K562 (cell line): ENCODE measurements at regions of chr1 and their contacts with region 1.

Region 1: GRCh38 chr1:31564134-31564989 is 12.0 kb upstream of the TINAGL1 start:
- DNase-seq: peak; percentile 63 to 72 (median 66)
- ATAC-seq: peak; percentile 94
- H3K4me3 ChIP-seq: no peak overlapping the region
- H3K27ac ChIP-seq: no peak overlapping the region
- H3K4me1 ChIP-seq: no peaks in the 10 kb centered on the region
- H3K27me3 ChIP-seq: peaks cover 11 to 43% of the 10 kb centered on the region in 2 experiments
- CTCF ChIP-seq: peak; percentile 87 to 95 (median 87)
- EP300 ChIP-seq: no peak
- POLR2A ChIP-seq: no peak
- RAD21 ChIP-seq: peak; percentile 88 to 96

Region 2: DNA sequence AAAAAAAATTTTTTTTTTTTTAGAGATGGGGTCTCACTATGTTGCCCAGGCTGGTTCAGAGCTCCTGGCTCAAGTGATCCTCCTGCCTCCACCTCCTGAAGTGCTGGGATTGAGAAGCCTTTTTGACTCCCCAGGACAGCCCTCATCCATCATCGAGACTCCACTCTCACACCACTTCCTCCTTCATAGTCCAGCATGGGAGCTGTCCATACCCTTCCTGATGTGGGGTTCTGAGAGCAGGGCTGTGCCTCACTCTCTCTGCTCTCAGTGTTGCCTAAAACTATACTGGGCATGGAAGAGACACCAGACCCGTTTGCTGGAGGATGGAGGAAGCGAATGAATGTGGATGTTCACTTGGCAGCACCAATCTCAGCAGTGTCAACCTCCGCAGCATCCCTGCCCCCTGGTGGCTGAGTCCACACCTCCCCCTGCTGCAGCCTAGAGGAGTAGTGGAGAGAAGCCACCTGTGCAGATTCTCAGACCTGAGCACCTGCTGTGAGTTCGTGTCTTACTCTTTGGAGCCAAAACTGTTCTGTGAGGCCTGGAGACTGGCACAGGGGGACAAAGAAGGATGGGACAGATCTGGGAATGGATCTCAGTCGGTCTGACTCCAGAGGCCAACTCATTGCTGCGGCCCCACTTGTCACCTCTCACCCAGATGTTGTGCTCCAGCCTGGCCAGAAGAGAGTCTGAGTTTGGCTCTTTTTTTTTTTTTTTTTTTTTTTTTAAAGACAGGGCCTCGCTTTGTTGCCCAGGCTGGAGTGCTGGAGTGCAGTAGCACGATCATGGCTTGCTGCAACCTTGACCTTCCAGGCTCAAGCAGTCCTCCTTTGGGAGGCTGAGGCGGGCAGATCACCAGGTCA is 29.6 kb after region 1 on chr1:
- CTCF ChIA-PET with region 1: interaction called, 25 read pairs
- POLR2A ChIA-PET with region 1: interaction called, 3 read pairs
- in situ Hi-C with region 1: no loop called
- intact Hi-C with region 1: loop called (anchors 1 kb)
- DNase-seq: peak; percentile 73 to 80 (median 78)
- ATAC-seq: peak; percentile 99
- H3K4me3 ChIP-seq: no peak overlapping the region
- H3K27ac ChIP-seq: no peak overlapping the region
- H3K4me1 ChIP-seq: peaks cover 0 to 4% of the 10 kb centered on the region in 2 experiments; a peak in 1 of 5 replicates
- H3K27me3 ChIP-seq: peaks cover 16 to 39% of the 10 kb centered on the region in 2 experiments
- CTCF ChIP-seq: peak; percentile 93 to 97 (median 94)
- EP300 ChIP-seq: no peak
- POLR2A ChIP-seq: no peak
- RAD21 ChIP-seq: peak; percentile 89 to 97

Region 3: GRCh38 chr1:31617917-31618660 is 53.7 kb after region 1 on chr1:
- CTCF ChIA-PET with region 1: interaction called, 6 read pairs
- POLR2A ChIA-PET with region 1: no interaction called
- in situ Hi-C with region 1: no loop called
- intact Hi-C with region 1: loop called (anchors 2 kb)
- DNase-seq: peak; percentile 65 to 89 (median 80)
- ATAC-seq: peak; percentile 93
- H3K4me3 ChIP-seq: peak overlapping the region; percentile 14; the same call in 1 of the 2 replicates
- H3K27ac ChIP-seq: no peak overlapping the region
- H3K4me1 ChIP-seq: peaks cover 0 to 19% of the 10 kb centered on the region in 2 experiments; a peak in 2 of 5 replicates
- H3K27me3 ChIP-seq: peaks cover 30 to 67% of the 10 kb centered on the region in 2 experiments
- CTCF ChIP-seq: peak; percentile 75 to 85 (median 76)
- EP300 ChIP-seq: no peak
- POLR2A ChIP-seq: no peak
- RAD21 ChIP-seq: peak; percentile 37 to 59

Region 4: GRCh38 chr1:31633053-31633452 is 68.7 kb after region 1 on chr1:
- CTCF ChIA-PET with region 1: interaction called, 3 read pairs
- POLR2A ChIA-PET with region 1: no interaction called
- in situ Hi-C with region 1: no loop called
- intact Hi-C with region 1: loop called (anchors 5 kb)
- DNase-seq: peak; percentile 64 to 76 (median 73)
- ATAC-seq: peak; percentile 94
- H3K4me3 ChIP-seq: no peak overlapping the region
- H3K27ac ChIP-seq: no peak overlapping the region; the same call in 2 of the 3 replicates
- H3K4me1 ChIP-seq: peaks cover 0 to 3% of the 10 kb centered on the region in 2 experiments; a peak in 1 of 5 replicates
- H3K27me3 ChIP-seq: no peaks in the 10 kb centered on the region
- CTCF ChIP-seq: peak; percentile 76 to 92 (median 78)
- EP300 ChIP-seq: no peak
- POLR2A ChIP-seq: no peak
- RAD21 ChIP-seq: peak in 1 of 2 experiments; percentile 56; a peak in 3 of 4 replicates

Region 5: DNA sequence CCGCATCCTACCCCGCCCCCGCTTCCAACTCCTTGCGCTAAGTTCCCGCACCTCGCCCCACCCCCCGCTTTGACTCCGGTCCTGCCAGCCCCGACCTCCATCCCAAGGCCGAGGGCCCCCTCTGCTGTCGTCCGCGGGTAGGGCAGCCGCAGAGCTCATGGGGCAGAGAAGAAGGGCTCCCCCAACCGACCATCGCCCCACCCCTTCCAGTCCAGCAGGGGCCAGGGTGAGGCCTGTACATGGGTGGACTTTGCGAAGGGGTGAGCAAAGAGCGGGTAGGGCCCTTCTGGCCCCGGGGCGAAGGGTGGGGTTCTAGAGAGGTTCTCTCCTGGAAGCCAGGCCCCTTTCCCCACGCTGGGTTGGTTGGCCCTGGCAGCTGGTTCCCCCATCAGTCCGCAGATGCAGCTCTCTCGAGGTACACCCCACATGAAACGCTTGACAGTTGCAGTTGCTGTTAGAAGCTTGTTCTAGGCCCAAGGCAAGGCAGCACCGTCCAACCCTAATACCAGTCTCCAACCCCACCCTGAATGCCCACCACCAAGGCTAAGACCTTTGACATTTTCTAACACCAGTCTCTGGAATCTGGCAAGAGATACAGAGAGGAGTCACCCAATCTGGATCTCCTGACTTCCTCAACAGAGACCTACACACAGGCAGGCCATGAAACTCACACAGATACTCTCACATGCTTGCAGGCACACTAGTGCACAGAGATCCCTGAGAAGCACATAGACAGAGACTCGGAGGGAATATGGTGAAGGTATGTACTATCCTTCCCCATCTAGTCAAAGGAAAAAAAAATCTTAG is 225.1 kb after region 1 on chr1:
- CTCF ChIA-PET with region 1: interaction called, 11 read pairs
- POLR2A ChIA-PET with region 1: interaction called, 3 read pairs
- in situ Hi-C with region 1: no loop called
- intact Hi-C with region 1: loop called (anchors 10 kb)
- DNase-seq: peak; percentile 95 to 99 (median 98)
- ATAC-seq: peak; percentile 91
- H3K4me3 ChIP-seq: peak overlapping the region; percentile 57
- H3K27ac ChIP-seq: no peak overlapping the region
- H3K4me1 ChIP-seq: peaks cover 9 to 29% of the 10 kb centered on the region in 2 experiments; a peak in 4 of 5 replicates
- H3K27me3 ChIP-seq: peaks cover 16 to 44% of the 10 kb centered on the region in 2 experiments
- CTCF ChIP-seq: peak; percentile 92 to 99 (median 99)
- EP300 ChIP-seq: peak; percentile 19; the same call in 1 of the 2 replicates
- POLR2A ChIP-seq: no peak
- RAD21 ChIP-seq: peak; percentile 98